ENCODE measurements at regions of chr12 and their contacts with region 1.

Region 1: GRCh38 chr12:53267999-53268647 is at the start of gene ESPL1:
- DNase-seq: peak; percentile 95
- ATAC-seq: peak; percentile 89
- H3K4me3 Mint-ChIP-seq: peak within 1 kb of the TSS; percentile 94
- H3K27ac Mint-ChIP-seq: peak within 1 kb of the TSS; percentile 97
- H3K4me1 Mint-ChIP-seq: peaks cover 33% of the 10 kb centered on the region
- H3K27me3 Mint-ChIP-seq: no peaks in the 10 kb centered on the region
- CTCF ChIP-seq: peak; percentile 56
- total RNA-seq, gene ESPL1: 62.1 to 63.4 TPM

Region 2: GRCh38 chr12:52879394-52880351 is 388.4 kb before region 1 on chr12:
- CTCF ChIA-PET with region 1: no interaction called
- POLR2A ChIA-PET with region 1: no interaction called
- intact Hi-C with region 1: no loop called
- DNase-seq: peak; percentile 82
- ATAC-seq: peak; percentile 95
- H3K4me3 Mint-ChIP-seq: peak overlapping the region; percentile 54
- H3K27ac Mint-ChIP-seq: no peak overlapping the region
- H3K4me1 Mint-ChIP-seq: peaks cover 5% of the 10 kb centered on the region
- H3K27me3 Mint-ChIP-seq: peaks cover 6% of the 10 kb centered on the region
- CTCF ChIP-seq: peak; percentile 92

Region 3: GRCh38 chr12:52956987-52957386 is 311.1 kb before region 1 on chr12:
- CTCF ChIA-PET with region 1: no interaction called
- POLR2A ChIA-PET with region 1: no interaction called
- intact Hi-C with region 1: no loop called
- DNase-seq: no peak
- ATAC-seq: no peak
- H3K4me3 Mint-ChIP-seq: no peak overlapping the region
- H3K27ac Mint-ChIP-seq: no peak overlapping the region
- H3K4me1 Mint-ChIP-seq: no peaks in the 10 kb centered on the region
- H3K27me3 Mint-ChIP-seq: no peaks in the 10 kb centered on the region
- CTCF ChIP-seq: no peak

Region 4: GRCh38 chr12:53180220-53180930 is 87.7 kb before region 1 on chr12 and contains the starts of genes CSAD and ZNF740:
- CTCF ChIA-PET with region 1: interaction called, 11 read pairs
- POLR2A ChIA-PET with region 1: interaction called, 10 read pairs
- intact Hi-C with region 1: no loop called
- DNase-seq: peak; percentile 99
- ATAC-seq: peak; percentile 95
- H3K4me3 Mint-ChIP-seq: peak within 1 kb of the TSS; percentile 89
- H3K27ac Mint-ChIP-seq: peak within 1 kb of the TSS; percentile 96
- H3K4me1 Mint-ChIP-seq: peaks cover 51% of the 10 kb centered on the region
- H3K27me3 Mint-ChIP-seq: no peaks in the 10 kb centered on the region
- CTCF ChIP-seq: no peak
- total RNA-seq, gene CSAD: 13.8 to 18.6 TPM
- total RNA-seq, gene ZNF740: 31.3 to 35.9 TPM

Region 5: GRCh38 chr12:53205747-53206419 is 62.2 kb before region 1 on chr12:
- CTCF ChIA-PET with region 1: interaction called, 213 read pairs
- POLR2A ChIA-PET with region 1: interaction called, 17 read pairs
- intact Hi-C with region 1: loop called (anchors 5 kb)
- DNase-seq: peak; percentile 92
- ATAC-seq: peak; percentile 72
- H3K4me3 Mint-ChIP-seq: peak overlapping the region; percentile 93
- H3K27ac Mint-ChIP-seq: peak overlapping the region; percentile 91
- H3K4me1 Mint-ChIP-seq: peaks cover 68% of the 10 kb centered on the region
- H3K27me3 Mint-ChIP-seq: no peaks in the 10 kb centered on the region
- CTCF ChIP-seq: no peak

Region 6: DNA sequence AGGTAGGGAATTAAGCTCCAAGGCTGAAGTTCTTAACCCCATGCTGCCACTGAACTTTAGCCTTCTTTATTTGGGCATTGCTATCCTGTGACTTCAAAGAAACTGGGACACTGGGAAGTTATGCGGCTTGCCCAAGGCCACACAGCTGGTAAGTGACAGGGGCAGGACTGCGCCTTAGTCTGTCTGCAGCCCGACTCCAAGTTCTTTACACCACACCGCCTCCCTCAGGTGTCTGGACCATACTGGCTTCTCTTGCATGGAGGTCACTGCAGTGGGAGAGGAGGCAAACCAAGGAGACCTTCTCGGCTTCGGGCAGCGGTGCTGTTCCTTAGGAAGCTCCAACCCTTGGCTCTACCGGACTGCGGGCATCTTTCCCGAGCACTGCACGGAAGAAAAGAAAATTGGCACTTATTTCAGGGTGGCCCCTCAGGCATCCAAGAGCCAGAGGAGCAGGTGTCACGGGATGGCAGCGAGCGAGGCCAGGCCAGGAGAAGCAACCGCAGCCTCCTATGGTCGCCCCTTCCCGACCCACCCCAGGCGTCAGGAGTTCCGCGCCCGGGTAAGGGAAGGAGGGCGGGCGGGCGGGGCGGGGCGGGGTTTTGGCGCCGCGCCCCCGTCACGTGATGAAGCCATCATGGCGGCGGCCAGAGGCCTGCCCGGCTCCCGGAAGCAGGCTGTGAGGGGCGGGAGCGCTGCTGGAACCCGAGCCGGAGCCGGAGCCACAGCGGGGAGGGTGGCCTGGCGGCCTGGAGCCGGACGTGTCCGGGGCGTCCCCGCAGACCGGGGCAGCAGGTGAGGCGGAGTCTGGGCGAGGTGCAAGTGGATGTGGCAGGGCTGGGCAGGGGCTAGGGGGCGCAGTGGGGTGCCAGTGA is 16.4 kb before region 1 on chr12:
- CTCF ChIA-PET with region 1: interaction called, 55 read pairs
- POLR2A ChIA-PET with region 1: interaction called, 12 read pairs
- intact Hi-C with region 1: no loop called
- DNase-seq: peak; percentile 81
- ATAC-seq: peak; percentile 90
- H3K4me3 Mint-ChIP-seq: peak overlapping the region; percentile 83
- H3K27ac Mint-ChIP-seq: peak overlapping the region; percentile 95
- H3K4me1 Mint-ChIP-seq: peaks cover 39% of the 10 kb centered on the region
- H3K27me3 Mint-ChIP-seq: no peaks in the 10 kb centered on the region
- CTCF ChIP-seq: peak; percentile 47

Region 7: GRCh38 chr12:53287741-53288216 is 19.7 kb after region 1 on chr12:
- CTCF ChIA-PET with region 1: interaction called, 37 read pairs
- POLR2A ChIA-PET with region 1: interaction called, 8 read pairs
- intact Hi-C with region 1: no loop called
- DNase-seq: peak; percentile 80
- ATAC-seq: peak; percentile 85
- H3K4me3 Mint-ChIP-seq: no peak overlapping the region
- H3K27ac Mint-ChIP-seq: no peak overlapping the region
- H3K4me1 Mint-ChIP-seq: peaks cover 17% of the 10 kb centered on the region
- H3K27me3 Mint-ChIP-seq: no peaks in the 10 kb centered on the region
- CTCF ChIP-seq: peak; percentile 57

Region 8: DNA sequence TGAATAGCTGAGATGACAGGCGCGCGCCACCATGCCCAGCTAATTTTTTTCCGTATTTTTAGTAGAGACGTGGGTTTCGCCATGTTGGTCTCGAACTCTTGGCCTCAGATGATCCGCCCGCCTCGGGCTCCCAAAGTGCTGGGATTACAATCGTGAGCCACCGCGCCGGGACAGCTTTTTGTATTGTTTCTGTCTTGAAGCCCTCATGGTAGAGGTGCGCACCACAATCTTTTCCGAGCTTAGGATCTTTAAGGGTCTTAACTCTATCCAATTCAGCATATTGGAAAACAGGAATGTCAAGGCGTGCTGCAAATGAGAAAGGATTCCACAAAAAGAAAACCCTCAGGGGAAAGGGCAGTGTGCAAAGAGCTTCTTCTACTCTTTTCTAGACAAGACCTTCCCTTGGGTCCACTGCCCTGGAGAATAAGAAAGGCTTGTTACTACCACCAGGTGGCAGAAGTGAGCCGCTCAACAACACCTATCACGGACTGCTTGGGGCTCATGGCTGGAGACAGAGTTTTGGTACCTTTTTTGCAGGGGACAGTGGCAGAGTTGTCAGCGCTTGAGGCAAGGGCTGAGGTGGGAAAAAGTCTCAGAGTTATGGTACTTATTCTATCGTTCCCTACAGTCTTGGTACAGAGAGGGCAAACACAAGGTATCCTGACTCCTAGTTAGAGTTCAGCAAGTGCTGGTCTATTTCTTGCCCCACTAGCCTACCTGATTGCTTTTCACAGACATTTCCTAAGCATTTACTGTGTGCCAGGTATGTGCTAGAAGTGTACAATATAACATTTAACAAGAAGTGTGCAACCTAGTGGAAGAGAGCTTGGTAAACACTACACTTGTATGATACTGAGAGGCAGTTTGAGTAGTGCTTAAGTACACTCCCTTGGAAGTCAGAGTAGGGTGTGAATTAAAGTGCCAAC is 84.5 kb after region 1 on chr12:
- CTCF ChIA-PET with region 1: interaction called, 14 read pairs
- POLR2A ChIA-PET with region 1: no interaction called
- intact Hi-C with region 1: no loop called
- DNase-seq: peak; percentile 93
- ATAC-seq: peak; percentile 99
- H3K4me3 Mint-ChIP-seq: no peak overlapping the region
- H3K27ac Mint-ChIP-seq: no peak overlapping the region
- H3K4me1 Mint-ChIP-seq: peaks cover 10% of the 10 kb centered on the region
- H3K27me3 Mint-ChIP-seq: no peaks in the 10 kb centered on the region
- CTCF ChIP-seq: peak; percentile 83

Region 9: GRCh38 chr12:53427905-53428594 is 159.9 kb after region 1 on chr12:
- CTCF ChIA-PET with region 1: no interaction called
- POLR2A ChIA-PET with region 1: no interaction called
- intact Hi-C with region 1: no loop called
- DNase-seq: peak; percentile 62
- ATAC-seq: peak; percentile 99
- H3K4me3 Mint-ChIP-seq: no peak overlapping the region
- H3K27ac Mint-ChIP-seq: no peak overlapping the region
- H3K4me1 Mint-ChIP-seq: peaks cover 9% of the 10 kb centered on the region
- H3K27me3 Mint-ChIP-seq: no peaks in the 10 kb centered on the region
- CTCF ChIP-seq: no peak

Measured in activated CD8-positive, alpha-beta T cell treated with anti-CD3 and anti-CD28 coated beads for 36 hours (primary cell).